Transverse colon (tissue), 4 donors: ENCODE measurements at regions of chr2 and their contacts with region 1.

Region 1: DNA sequence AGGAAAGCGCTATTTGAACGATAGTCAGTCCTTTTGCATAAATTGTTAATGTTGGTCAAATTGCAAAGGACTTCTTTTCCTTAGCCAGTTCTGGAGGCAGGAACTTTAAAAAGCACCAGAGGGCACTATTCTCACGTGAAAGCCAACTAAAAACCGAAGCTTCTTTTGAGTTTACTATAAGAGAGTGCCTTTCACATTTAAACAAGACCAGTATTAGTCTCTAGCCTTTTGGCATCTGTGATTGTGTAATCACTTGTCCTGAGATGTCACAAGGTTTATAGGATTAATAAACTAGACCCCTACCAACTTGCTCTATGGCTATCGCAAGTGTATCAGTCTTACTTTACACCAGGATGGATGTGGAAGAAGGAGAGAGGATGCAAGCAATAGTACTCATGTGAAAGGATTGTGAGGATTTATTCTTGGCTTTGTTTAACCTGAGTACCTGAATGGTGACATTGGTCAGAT is 14.4 kb upstream of the STAT4 start:
- DNase-seq: no peak
- H3K4me3 ChIP-seq: no peak overlapping the region
- H3K27ac ChIP-seq: no peak overlapping the region
- H3K4me1 ChIP-seq: peaks cover 0 to 34% (median 17%) of the 10 kb centered on the region in 4 donors
- H3K27me3 ChIP-seq: no peaks in the 10 kb centered on the region
- CTCF ChIP-seq: peak; percentile 32 to 65 (median 61)
- EP300 ChIP-seq: no peak
- POLR2A ChIP-seq: no peak

Region 2: DNA sequence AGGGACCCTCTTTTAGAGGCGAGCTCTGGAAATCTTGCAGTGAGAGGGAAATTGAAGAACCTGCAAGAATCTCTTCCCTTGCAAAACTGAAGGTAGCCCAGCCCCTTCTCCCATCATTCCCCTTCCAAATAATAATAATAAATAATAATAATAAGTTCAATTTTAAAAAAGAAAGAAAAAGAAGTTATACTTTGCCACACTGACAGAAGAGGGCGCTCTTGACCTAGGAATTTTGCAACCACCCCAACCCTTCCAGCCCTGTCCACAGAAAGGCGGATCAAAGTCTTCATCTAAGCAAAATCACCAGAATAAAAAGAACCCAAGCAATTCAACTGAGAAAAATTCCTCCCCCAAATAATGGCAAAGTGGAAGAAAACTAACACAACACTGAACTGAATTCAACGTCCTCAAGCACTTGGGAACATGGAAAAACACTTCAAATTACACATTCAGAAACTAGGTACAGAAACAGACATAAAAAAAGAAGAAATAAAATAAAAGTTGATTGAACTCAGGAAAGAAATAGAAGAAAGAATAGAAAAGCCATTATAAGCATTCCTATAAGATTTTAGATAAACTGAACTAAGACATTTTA is 383.5 kb before region 1 on chr2:
- in situ Hi-C with region 1: loop called in 1 of 4 experiments (anchors 25 kb)
- intact Hi-C with region 1: no loop called
- DNase-seq: peak; percentile 63
- H3K4me3 ChIP-seq: no peak overlapping the region
- H3K27ac ChIP-seq: no peak overlapping the region
- H3K4me1 ChIP-seq: peaks cover 0 to 22% (median 3%) of the 10 kb centered on the region in 4 donors
- H3K27me3 ChIP-seq: no peaks in the 10 kb centered on the region
- CTCF ChIP-seq: peak; percentile 61 to 78 (median 67)
- EP300 ChIP-seq: no peak
- POLR2A ChIP-seq: no peak

Region 3: GRCh38 chr2:191202881-191203397 is 37.7 kb after region 1 on chr2:
- in situ Hi-C with region 1: no loop called
- intact Hi-C with region 1: no loop called
- DNase-seq: peak; percentile 19
- H3K4me3 ChIP-seq: no peak overlapping the region
- H3K27ac ChIP-seq: peak overlapping the region in 1 of 4 donors; percentile 12
- H3K4me1 ChIP-seq: peaks cover 0 to 8% (median 0%) of the 10 kb centered on the region in 4 donors
- H3K27me3 ChIP-seq: no peaks in the 10 kb centered on the region
- CTCF ChIP-seq: no peak
- EP300 ChIP-seq: no peak
- POLR2A ChIP-seq: no peak

Region 4: DNA sequence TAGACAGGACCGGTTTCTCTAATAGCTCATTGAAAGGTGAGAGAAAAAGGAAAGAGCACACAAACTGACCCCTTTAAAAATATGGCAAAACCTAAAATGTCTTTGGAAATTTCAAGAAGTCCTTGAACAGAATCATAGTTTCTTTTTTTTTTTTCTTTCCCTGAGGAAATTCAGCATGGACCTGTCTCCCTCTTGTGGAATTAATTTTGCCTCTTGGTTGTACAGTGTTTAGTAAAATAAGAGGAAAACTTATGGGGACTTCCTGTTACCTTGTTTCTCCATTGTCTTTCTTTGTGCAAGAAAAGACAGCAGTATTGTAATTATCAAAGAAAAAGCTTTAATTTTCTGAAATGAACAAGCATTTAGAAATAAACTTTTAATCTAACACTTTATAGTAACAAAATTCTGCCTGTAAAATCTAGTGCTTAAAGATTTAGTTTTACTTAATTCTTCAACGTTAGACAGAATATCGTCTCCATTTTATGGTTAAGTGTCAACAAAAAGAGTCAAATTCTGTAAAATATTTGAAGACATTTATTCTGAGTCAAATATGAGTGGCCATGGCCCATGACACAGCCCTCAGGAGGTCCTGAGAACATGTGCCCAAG is 336.5 kb after region 1 on chr2:
- in situ Hi-C with region 1: loop called in 3 of 4 experiments (anchors 10 to 25 kb)
- intact Hi-C with region 1: no loop called
- DNase-seq: no peak
- H3K4me3 ChIP-seq: no peak overlapping the region
- H3K27ac ChIP-seq: no peak overlapping the region
- H3K4me1 ChIP-seq: peaks cover 0 to 4% (median 1%) of the 10 kb centered on the region in 4 donors
- H3K27me3 ChIP-seq: no peaks in the 10 kb centered on the region
- CTCF ChIP-seq: peak; percentile 50 to 72 (median 59)
- EP300 ChIP-seq: no peak
- POLR2A ChIP-seq: no peak

Region 5: DNA sequence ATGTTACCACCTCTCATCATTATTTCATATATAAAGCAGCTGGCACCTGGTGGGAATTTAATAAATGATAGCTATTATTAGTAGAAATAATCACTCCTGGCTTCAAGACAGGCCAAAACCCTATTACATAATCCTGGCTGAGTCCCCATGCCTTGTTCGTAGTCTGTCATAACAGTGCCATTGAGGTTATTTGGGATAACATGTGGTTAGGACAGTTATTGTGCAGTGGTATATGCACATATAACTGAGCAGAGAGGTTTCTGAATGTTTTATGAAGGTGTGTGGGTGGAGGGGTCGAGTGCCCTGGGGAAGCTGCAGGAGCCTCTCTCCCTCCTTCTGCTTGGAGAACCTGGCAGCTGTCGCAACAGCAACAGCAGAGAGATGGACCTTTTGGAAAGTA is 350.3 kb after region 1 on chr2:
- in situ Hi-C with region 1: loop called in 2 of 4 experiments (anchors 5 to 25 kb)
- intact Hi-C with region 1: loop called (anchors 10 kb)
- DNase-seq: no peak
- H3K4me3 ChIP-seq: no peak overlapping the region
- H3K27ac ChIP-seq: no peak overlapping the region
- H3K4me1 ChIP-seq: no peaks in the 10 kb centered on the region
- H3K27me3 ChIP-seq: no peaks in the 10 kb centered on the region
- CTCF ChIP-seq: no peak
- EP300 ChIP-seq: no peak
- POLR2A ChIP-seq: no peak

Region 6: DNA sequence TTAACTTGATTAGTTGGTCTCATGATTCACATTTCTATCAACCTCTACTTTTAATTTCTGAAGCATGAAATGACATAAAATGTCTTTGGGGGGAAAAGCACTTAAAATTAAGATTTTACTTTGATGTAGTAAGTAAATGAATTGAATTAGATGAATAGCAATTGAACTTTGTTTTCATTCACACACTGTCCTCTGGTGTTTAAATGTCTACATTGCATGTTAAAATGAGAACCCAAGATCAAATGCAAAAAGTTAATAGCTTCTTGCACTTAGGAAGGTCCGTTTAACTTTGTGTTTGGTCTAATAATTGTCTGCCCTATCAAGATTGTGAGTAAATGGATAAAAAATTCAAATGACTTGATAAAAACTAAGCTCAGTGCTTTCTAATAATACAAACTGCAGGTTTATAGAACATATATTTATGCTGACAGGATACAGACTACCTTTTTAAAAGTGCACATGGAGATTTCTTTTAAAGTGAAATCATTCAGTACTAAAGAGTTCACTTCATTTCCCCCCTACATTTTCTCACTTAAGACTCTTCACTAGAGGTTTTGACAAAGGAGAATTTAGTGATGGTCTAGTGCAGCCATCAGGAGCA is 356.5 kb after region 1 on chr2:
- in situ Hi-C with region 1: loop called in 2 of 4 experiments (anchors 5 to 25 kb)
- intact Hi-C with region 1: loop called (anchors 10 kb)
- DNase-seq: no peak
- H3K4me3 ChIP-seq: no peak overlapping the region
- H3K27ac ChIP-seq: no peak overlapping the region
- H3K4me1 ChIP-seq: no peaks in the 10 kb centered on the region
- H3K27me3 ChIP-seq: no peaks in the 10 kb centered on the region
- CTCF ChIP-seq: peak; percentile 71 to 77 (median 76)
- EP300 ChIP-seq: no peak
- POLR2A ChIP-seq: no peak

Region 7: DNA sequence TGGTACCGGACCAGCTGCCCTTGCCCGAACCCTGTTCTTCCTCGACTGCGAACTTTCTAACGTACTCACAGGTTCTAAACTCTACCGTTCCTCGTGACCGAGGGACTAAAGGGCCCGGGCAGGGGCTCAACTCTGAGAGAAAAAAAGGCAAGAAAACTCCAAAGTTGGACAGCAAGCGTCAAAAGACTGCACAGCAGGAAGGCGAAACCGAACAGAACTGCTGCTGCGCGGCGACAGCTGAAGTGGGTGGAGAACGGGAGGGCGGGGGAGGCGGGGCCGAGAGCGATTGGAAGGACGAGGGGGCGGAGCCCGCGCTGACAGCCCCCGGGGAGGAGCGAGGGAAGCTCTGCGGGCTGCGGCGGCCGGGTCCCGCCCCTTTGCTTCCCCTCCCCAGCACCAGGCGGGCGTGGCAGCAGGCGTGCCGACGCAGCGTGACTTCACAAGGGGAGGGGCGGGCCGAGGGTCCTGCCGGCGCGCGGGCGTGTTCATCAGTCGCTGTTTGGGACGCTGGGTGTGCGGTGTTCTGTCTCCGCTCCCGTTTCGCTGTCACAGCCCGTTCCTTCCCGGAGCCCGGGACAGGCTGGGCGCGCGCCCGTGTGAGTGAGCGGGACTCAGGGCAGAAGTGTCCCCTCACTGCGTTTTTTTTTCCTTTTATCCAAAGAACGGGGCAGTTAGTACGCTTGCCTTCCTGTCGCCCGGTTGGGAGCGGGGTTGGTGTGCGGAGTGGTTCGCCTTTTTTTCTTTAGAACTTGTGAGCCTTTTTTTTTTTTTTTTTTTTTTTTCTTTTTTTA is 512.6 kb after region 1 on chr2 and contains the start of gene NABP1:
- in situ Hi-C with region 1: loop called in 1 of 4 experiments (anchors 25 kb)
- intact Hi-C with region 1: no loop called
- DNase-seq: peak; percentile 100
- H3K4me3 ChIP-seq: peak within 1 kb of the TSS; percentile 57 to 80 (median 77)
- H3K27ac ChIP-seq: peak within 1 kb of the TSS; percentile 95 to 98 (median 98)
- H3K4me1 ChIP-seq: peaks cover 4 to 43% (median 7%) of the 10 kb centered on the region in 4 donors
- H3K27me3 ChIP-seq: no peaks in the 10 kb centered on the region
- CTCF ChIP-seq: no peak
- EP300 ChIP-seq: peak; percentile 28
- POLR2A ChIP-seq: peak; percentile 100
- total RNA-seq, gene NABP1: 1.00 to 55.6 (median 33.0) TPM